ENCODE measurements at regions of chrX and their contacts with region 1.

Region 1: DNA sequence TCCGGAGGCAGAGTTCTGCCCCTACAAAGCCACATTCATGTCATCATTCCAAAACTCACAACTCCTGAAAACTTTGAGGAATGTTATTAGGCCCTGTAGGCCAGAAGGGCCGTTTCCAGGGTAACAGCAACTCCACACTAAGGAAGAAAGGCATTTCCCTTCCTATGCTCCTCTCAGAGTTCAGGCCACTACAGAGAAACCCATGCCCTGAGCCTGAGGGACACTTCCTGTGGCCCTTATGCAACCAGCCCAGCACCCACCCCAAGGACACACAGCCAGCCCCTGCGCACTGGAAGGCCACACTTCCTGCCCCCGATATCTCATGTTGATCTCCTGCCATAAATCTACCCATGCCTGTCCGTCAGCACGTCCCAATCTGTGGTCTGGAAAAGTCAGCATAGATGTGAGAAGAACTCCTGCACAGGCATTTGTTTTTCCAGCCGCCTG is 289.3 kb downstream of the BCOR start:
- DNase-seq: peak; percentile 11
- H3K4me3 ChIP-seq: no peak overlapping the region
- H3K27ac ChIP-seq: no peak overlapping the region
- H3K4me1 ChIP-seq: peaks cover 15% of the 10 kb centered on the region
- H3K27me3 ChIP-seq: no peaks in the 10 kb centered on the region
- CTCF ChIP-seq: no peak

Region 2: DNA sequence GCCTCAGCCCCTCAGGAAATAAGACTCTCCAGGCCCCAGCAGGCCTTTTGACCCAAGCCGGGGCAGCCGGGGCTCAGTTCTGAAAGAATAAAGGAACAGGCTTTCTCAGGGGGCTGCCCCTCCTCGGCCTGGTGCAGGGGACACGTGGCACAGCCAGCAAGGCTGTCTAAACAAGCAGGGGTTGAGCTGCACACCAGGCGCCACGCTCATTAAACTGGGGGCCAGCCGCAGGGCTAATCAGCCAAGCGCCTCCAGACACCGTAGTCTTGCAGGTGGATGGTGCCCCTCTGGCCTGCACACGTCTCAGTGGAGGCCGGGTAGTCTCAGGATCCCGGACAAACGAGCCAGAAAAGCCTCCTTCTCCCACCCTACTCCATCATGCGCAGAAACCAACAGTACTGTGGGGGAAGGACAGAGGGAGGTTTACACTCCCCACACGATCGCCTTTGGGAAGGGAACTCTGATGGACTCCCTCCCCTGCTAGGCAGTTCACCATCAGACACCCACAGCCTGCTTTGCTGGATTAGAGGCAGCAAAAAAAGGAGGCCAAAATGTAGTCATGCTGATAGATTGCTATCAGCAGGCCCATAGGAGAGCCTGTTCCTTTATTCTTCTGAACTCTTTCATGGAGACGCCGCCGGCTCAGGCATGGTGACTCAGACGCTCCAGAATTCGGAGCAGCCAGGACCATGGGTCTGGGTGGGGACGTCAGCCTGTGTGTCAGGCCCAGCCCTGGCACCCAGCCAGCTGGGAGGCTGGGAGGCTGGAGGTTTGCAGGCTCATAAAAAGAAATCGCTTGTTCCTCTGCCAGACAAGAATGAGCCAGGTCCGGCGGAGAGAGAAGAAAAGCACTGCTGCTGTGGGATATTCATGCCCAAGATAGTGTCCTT is 53.1 kb before region 1 on chrX:
- CTCF ChIA-PET with region 1: no interaction called
- dilution Hi-C with region 1: no loop called
- in situ Hi-C with region 1: no loop called
- intact Hi-C with region 1: loop called (anchors 2 kb)
- DNase-seq: peak; percentile 89
- H3K4me3 ChIP-seq: no peak overlapping the region
- H3K27ac ChIP-seq: no peak overlapping the region
- H3K4me1 ChIP-seq: peaks cover 21% of the 10 kb centered on the region
- H3K27me3 ChIP-seq: no peaks in the 10 kb centered on the region
- CTCF ChIP-seq: no peak

Measured in mammary epithelial cell (primary cell).